MCF 10A (cell line): ENCODE measurements at regions of chr18 and their contacts with region 1.

Region 1: GRCh38 chr18:50507120-50507590 is 52.7 kb upstream of the MAPK4 start:
- DNase-seq: peak; percentile 63
- H3K4me3 Mint-ChIP-seq: no peak overlapping the region
- H3K27ac Mint-ChIP-seq: no peak overlapping the region
- H3K4me1 Mint-ChIP-seq: no peaks in the 10 kb centered on the region
- H3K27me3 Mint-ChIP-seq: peaks cover 47% of the 10 kb centered on the region
- CTCF ChIP-seq: peak; percentile 89

Region 2: GRCh38 chr18:50231621-50232020 is 275.5 kb before region 1 on chr18:
- CTCF ChIA-PET with region 1: no interaction called
- POLR2A ChIA-PET with region 1: no interaction called
- intact Hi-C with region 1: no loop called
- DNase-seq: peak; percentile 58
- H3K4me3 Mint-ChIP-seq: no peak overlapping the region
- H3K27ac Mint-ChIP-seq: peak overlapping the region; percentile 17
- H3K4me1 Mint-ChIP-seq: peaks cover 14% of the 10 kb centered on the region
- H3K27me3 Mint-ChIP-seq: no peaks in the 10 kb centered on the region
- CTCF ChIP-seq: no peak

Region 3: GRCh38 chr18:50469380-50469781 is 37.8 kb before region 1 on chr18:
- CTCF ChIA-PET with region 1: no interaction called
- POLR2A ChIA-PET with region 1: no interaction called
- intact Hi-C with region 1: no loop called
- DNase-seq: peak; percentile 46
- H3K4me3 Mint-ChIP-seq: no peak overlapping the region
- H3K27ac Mint-ChIP-seq: no peak overlapping the region
- H3K4me1 Mint-ChIP-seq: peaks cover 27% of the 10 kb centered on the region
- H3K27me3 Mint-ChIP-seq: peaks cover 32% of the 10 kb centered on the region
- CTCF ChIP-seq: no peak

Region 4: DNA sequence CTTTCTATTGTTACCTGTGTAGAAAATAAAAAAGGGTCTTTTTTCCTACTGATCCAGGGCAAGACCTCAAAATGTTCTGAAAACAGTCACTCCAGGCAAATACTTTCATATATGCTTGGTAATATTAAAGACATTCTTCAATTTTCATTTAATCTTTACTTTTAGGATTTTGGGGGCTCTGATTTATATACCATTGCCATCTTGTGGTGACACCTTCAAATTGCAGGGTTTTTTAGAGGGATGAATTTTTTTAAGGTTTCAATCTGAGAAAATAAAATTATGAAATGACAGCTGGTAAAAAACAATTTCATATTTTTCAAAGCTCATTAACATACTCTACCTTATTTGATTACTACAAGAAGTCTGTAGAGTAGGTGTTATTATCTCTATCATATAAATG is 79.6 kb after region 1 on chr18:
- CTCF ChIA-PET with region 1: interaction called, 4 read pairs
- POLR2A ChIA-PET with region 1: no interaction called
- intact Hi-C with region 1: loop called (anchors 2 kb)
- DNase-seq: peak; percentile 8
- H3K4me3 Mint-ChIP-seq: no peak overlapping the region
- H3K27ac Mint-ChIP-seq: no peak overlapping the region
- H3K4me1 Mint-ChIP-seq: no peaks in the 10 kb centered on the region
- H3K27me3 Mint-ChIP-seq: no peaks in the 10 kb centered on the region
- CTCF ChIP-seq: peak; percentile 16

Region 5: DNA sequence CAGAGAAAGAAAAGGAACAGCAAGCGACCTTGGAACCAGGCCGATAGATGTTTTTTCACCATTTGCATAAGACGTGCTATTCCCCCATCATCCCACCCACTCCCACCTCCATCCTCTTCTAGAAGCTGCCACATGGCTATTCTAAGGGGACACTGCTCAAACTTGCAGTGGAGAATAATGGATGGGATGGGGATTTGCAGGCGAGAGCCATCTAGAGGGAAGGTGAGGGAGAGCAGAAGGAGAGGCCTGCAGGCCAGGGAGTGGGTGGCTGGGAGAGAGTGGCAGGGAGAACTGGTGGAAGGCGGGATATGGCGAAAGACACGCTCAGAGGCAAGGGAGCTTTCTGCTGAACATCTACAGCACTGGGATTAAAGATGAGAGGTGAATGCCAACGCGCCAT is 137.7 kb after region 1 on chr18:
- CTCF ChIA-PET with region 1: interaction called, 13 read pairs
- POLR2A ChIA-PET with region 1: no interaction called
- intact Hi-C with region 1: no loop called
- DNase-seq: peak; percentile 60
- H3K4me3 Mint-ChIP-seq: no peak overlapping the region
- H3K27ac Mint-ChIP-seq: no peak overlapping the region
- H3K4me1 Mint-ChIP-seq: peaks cover 5% of the 10 kb centered on the region
- H3K27me3 Mint-ChIP-seq: no peaks in the 10 kb centered on the region
- CTCF ChIP-seq: no peak

Region 6: GRCh38 chr18:50786864-50787263 is 279.7 kb after region 1 on chr18:
- CTCF ChIA-PET with region 1: interaction called, 11 read pairs
- POLR2A ChIA-PET with region 1: no interaction called
- intact Hi-C with region 1: loop called (anchors 1 kb)
- DNase-seq: no peak
- H3K4me3 Mint-ChIP-seq: no peak overlapping the region
- H3K27ac Mint-ChIP-seq: no peak overlapping the region
- H3K4me1 Mint-ChIP-seq: no peaks in the 10 kb centered on the region
- H3K27me3 Mint-ChIP-seq: peaks cover 16% of the 10 kb centered on the region
- CTCF ChIP-seq: no peak

Region 7: DNA sequence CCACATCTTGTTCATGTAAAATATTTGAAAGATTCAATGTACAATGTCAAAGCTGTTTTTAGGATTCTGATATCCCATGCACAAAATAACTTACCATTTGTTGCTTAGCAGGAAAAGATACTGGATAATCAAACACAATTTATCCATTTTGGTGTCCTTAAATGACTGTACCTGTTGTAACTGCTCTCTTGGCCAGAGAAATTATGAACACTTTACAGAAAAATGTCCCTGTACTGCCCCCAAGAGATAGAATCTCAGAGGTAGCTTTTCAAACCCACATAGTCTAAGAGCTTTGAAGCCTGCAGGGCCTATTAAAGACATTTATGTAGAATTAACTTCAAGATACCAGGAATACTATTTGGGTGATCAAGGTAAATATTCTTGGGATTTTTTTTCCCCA is 359.6 kb after region 1 on chr18:
- CTCF ChIA-PET with region 1: interaction called, 3 read pairs
- POLR2A ChIA-PET with region 1: no interaction called
- intact Hi-C with region 1: loop called (anchors 5 kb)
- DNase-seq: peak; percentile 22
- H3K4me3 Mint-ChIP-seq: no peak overlapping the region
- H3K27ac Mint-ChIP-seq: no peak overlapping the region
- H3K4me1 Mint-ChIP-seq: peaks cover 12% of the 10 kb centered on the region
- H3K27me3 Mint-ChIP-seq: no peaks in the 10 kb centered on the region
- CTCF ChIP-seq: peak; percentile 7

Region 8: GRCh38 chr18:51051105-51051712 is 544.1 kb after region 1 on chr18:
- CTCF ChIA-PET with region 1: interaction called, 3 read pairs
- POLR2A ChIA-PET with region 1: no interaction called
- intact Hi-C with region 1: loop called (anchors 1 kb)
- DNase-seq: peak; percentile 57
- H3K4me3 Mint-ChIP-seq: no peak overlapping the region
- H3K27ac Mint-ChIP-seq: no peak overlapping the region
- H3K4me1 Mint-ChIP-seq: peaks cover 4% of the 10 kb centered on the region
- H3K27me3 Mint-ChIP-seq: no peaks in the 10 kb centered on the region
- CTCF ChIP-seq: peak; percentile 72